Activated naive CD8-positive, alpha-beta T cell treated with anti-CD3 and anti-CD28 coated beads, Interleukin-2, amount 10 ng/mL, durations not matched to agents 7 days and 5 days (primary cell): ENCODE measurements at regions of chr2 and their contacts with region 1.

Region 1: DNA sequence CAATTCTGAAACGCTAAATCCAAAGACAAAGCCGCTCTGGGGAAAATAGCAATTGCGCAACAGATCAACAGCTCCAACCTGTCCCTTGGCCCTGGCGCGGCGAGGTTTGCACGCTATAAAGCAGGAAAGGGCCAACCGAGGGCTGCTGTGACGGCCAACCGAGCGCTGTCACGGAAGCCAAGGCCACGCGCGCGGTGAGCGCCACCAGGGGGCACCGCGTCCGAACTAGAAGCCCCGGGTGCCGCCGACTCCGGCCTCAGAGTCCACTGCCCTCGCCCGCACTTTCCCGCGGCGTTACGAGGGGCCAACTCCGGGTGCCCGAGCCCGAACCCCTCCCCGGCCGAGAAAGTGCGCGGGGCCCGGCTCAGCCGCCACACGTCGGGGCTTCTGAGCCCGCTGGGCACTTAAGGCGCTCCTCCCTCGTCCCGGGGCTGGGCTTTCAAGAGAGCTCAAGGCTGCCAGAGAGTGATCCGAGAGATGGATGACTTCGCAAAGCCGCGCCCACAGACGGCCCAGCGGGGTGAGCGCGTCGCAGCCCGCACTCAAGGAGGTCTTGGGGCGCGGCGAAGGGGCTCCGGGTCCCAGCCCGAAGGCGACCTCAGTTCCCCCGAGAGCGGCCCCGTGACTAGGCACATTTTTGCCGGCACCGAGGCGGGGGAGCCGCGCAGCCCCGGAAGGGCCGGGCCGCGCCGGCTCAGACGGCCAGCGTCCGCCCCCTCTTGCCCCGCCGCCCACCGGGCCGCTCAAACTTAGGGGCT is 897 bp downstream of the NFE2L2 start:
- DNase-seq: peak; percentile 98
- ATAC-seq: peak; percentile 64
- H3K4me3 Mint-ChIP-seq: peak overlapping the region; percentile 97
- H3K27ac Mint-ChIP-seq: peak overlapping the region; percentile 98
- H3K4me1 Mint-ChIP-seq: peaks cover 54% of the 10 kb centered on the region
- H3K27me3 Mint-ChIP-seq: no peaks in the 10 kb centered on the region

Region 2: DNA sequence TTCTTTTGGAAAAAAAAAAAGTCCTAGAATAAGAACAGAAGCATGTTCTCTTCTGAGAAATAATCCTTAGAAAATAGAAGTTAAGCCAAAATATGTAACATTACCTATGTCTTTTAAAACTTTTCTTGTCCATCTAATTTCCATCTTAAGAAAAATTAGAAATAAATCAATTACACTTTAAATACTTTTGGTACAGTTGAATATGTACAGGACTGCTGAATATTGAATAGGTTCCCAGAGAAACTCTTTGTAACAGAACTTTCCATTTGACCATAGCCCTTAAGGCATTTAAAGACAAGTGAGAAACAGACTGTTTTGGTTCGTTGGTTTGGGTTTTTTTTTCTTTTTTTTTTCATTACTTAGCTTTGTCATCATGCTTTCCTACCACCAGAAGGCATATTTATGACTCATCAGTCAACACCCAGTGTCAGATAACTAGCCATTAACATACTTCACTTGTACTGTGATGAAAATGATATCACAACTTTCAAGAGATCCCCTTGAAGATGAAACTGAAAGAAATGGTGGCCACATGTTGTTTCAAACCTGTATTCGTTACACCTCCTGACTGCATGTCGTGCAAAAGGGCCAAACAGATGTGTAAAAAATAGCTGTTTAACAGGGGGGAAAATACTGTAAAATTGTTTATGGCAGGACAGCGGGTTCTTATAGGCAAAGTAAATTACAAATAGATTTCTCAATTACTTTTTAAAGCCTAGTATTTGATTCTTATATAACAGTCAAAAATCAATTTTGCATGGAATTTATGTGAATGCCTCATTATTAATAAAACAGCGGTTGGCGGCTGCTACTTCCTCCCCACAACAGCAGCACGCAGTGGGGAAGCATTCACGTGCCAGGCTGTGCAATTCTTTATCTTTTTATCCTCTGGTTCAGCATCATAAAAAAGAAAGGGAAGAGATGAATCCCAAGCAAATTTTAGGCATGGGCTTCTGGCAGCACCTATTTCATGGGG is 331.8 kb before region 1 on chr2:
- POLR2A ChIA-PET with region 1: no interaction called
- DNase-seq: no peak
- ATAC-seq: peak; percentile 96
- H3K4me3 Mint-ChIP-seq: peak overlapping the region; percentile 54
- H3K27ac Mint-ChIP-seq: peak overlapping the region; percentile 87
- H3K4me1 Mint-ChIP-seq: peaks cover 17% of the 10 kb centered on the region
- H3K27me3 Mint-ChIP-seq: no peaks in the 10 kb centered on the region

Region 3: GRCh38 chr2:177164584-177165052 is 99.0 kb before region 1 on chr2:
- POLR2A ChIA-PET with region 1: interaction called, 66 read pairs
- DNase-seq: peak; percentile 77
- ATAC-seq: peak; percentile 55
- H3K4me3 Mint-ChIP-seq: no peak overlapping the region
- H3K27ac Mint-ChIP-seq: no peak overlapping the region
- H3K4me1 Mint-ChIP-seq: peaks cover 34% of the 10 kb centered on the region
- H3K27me3 Mint-ChIP-seq: peaks cover 16% of the 10 kb centered on the region

Region 4: GRCh38 chr2:177212106-177212890 is 51.3 kb before region 1 on chr2 and contains the start of gene HNRNPA3:
- POLR2A ChIA-PET with region 1: interaction called, 66 read pairs
- DNase-seq: peak; percentile 100
- ATAC-seq: peak; percentile 88
- H3K4me3 Mint-ChIP-seq: peak within 1 kb of the TSS; percentile 100
- H3K27ac Mint-ChIP-seq: peak within 1 kb of the TSS; percentile 100
- H3K4me1 Mint-ChIP-seq: peaks cover 34% of the 10 kb centered on the region
- H3K27me3 Mint-ChIP-seq: no peaks in the 10 kb centered on the region
- total RNA-seq, gene HNRNPA3: 250 to 256 TPM

Region 5: DNA sequence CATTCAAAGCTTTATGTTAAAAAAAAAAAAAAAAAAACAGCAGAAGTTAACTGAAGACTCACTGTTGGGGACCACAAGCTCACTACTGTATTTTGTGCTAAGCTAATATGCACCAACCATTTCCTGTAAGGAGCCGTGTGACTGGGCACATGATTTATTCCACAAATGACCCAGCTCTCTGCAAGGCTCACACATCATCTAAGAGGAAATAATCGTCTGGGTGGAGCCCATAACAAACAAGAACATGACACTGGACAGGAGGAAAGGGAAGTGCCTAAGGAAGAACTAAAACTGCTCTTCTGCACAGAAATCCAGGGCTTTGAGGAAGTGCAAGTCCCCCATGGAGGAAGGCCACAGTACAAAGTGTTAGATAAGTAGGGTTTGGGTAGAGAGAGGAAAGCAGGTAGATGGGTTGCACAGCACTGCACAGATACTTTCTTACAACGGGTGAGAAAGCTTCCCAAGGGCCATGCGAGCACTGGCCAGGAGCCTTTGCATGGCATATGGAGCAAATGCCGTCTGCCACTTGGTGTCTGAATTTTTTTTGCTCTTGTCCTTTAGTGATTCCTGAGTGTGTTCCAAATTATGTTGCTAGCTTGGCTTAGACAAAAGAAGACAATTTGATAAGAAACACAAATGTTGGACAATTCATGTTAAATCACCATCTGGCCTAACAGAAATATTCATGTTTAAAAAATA is 23.5 kb before region 1 on chr2:
- POLR2A ChIA-PET with region 1: interaction called, 51 read pairs
- DNase-seq: no peak
- ATAC-seq: peak; percentile 93
- H3K4me3 Mint-ChIP-seq: peak overlapping the region; percentile 58
- H3K27ac Mint-ChIP-seq: peak overlapping the region; percentile 86
- H3K4me1 Mint-ChIP-seq: peaks cover 66% of the 10 kb centered on the region
- H3K27me3 Mint-ChIP-seq: no peaks in the 10 kb centered on the region

Region 6: DNA sequence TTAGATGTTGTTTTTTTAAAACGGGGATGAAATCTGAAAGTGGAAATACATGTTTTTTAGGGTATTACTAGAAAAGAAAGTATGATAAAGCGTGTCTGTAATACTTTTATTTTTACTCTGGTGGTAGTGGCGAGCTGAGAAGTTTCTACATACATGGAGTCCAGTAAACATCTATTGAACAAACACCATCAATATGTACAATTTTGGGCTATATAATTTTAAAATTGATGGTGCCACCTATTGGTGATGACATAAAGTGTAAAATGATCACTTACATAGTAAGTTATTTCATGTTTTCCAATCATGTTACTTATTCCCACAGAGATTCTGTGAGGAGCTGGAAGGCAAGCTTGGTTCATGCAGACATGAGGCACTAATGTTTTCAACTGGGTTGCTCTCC is 32.4 kb after region 1 on chr2:
- POLR2A ChIA-PET with region 1: interaction called, 256 read pairs
- DNase-seq: no peak
- ATAC-seq: peak; percentile 68
- H3K4me3 Mint-ChIP-seq: no peak overlapping the region
- H3K27ac Mint-ChIP-seq: no peak overlapping the region
- H3K4me1 Mint-ChIP-seq: peaks cover 37% of the 10 kb centered on the region
- H3K27me3 Mint-ChIP-seq: no peaks in the 10 kb centered on the region

Region 7: DNA sequence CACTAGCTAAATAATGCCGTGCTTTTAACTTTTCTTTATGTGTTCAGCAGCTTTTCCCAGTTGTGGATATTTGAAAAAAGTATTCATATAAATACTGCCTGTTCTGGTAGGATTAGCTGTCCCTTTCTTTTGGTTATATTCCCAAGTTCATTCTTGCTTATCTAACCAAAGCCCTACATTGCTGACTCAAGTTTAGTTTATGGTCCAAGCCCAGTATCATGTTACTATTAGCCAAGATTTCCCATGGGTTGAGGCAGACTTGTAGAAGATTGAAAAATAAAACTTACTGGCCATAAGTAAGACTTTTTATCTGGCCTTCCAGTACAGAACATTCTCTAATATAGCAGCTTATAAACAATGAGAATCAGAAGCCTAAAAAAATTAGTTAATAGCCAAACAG is 50.6 kb after region 1 on chr2:
- POLR2A ChIA-PET with region 1: interaction called, 33 read pairs
- DNase-seq: no peak
- ATAC-seq: no peak
- H3K4me3 Mint-ChIP-seq: no peak overlapping the region
- H3K27ac Mint-ChIP-seq: no peak overlapping the region
- H3K4me1 Mint-ChIP-seq: peaks cover 18% of the 10 kb centered on the region
- H3K27me3 Mint-ChIP-seq: no peaks in the 10 kb centered on the region

Region 8: DNA sequence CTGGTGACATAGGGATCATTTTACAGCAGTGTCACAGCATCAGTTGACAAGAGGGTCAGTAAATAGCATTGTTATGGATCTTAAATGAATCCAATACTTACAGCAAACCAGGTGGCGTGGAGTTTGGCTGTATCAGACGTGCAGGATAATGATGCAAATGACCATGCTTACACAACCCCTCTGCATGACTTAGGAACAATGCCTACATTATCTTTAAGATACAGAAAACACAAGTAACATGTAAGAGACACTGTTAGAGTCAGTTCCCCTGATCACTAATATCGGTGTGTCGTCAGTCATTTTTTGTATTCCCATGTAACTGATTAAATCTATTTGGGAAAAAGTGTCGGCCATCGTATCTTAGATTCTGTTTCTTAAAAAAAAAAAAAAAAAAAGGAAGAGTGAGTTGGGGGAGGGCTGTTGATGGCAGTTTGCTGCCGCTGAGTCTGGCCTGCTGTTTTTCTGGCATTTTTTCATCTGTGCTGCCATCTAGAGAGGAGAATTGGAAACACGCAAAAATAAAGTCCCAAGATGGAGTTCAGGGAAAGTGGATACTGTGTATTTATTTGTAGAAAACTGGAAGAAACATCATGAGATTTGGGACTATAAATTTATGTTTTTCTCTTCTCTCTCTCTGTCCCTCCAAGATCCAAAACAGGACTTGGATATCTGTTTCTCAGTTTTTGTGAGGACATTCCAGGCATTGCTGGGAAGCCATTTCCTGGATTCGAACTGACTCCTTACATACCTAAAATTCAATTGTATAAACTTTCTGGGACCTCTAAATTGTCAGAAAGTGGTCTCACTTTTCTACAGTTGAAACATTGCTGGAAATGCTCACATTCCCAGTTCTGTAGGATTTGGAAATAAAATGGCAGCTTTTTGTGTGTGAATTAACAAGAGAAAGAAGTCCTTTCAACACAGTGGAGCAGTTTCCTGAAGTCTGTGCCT is 68.7 kb after region 1 on chr2:
- POLR2A ChIA-PET with region 1: interaction called, 20 read pairs
- DNase-seq: no peak
- ATAC-seq: peak; percentile 81
- H3K4me3 Mint-ChIP-seq: no peak overlapping the region
- H3K27ac Mint-ChIP-seq: peak overlapping the region; percentile 44
- H3K4me1 Mint-ChIP-seq: peaks cover 20% of the 10 kb centered on the region
- H3K27me3 Mint-ChIP-seq: no peaks in the 10 kb centered on the region